Astrocyte of the cerebellum (primary cell): ENCODE measurements at regions of chr5 and their contacts with region 1.

Region 1: DNA sequence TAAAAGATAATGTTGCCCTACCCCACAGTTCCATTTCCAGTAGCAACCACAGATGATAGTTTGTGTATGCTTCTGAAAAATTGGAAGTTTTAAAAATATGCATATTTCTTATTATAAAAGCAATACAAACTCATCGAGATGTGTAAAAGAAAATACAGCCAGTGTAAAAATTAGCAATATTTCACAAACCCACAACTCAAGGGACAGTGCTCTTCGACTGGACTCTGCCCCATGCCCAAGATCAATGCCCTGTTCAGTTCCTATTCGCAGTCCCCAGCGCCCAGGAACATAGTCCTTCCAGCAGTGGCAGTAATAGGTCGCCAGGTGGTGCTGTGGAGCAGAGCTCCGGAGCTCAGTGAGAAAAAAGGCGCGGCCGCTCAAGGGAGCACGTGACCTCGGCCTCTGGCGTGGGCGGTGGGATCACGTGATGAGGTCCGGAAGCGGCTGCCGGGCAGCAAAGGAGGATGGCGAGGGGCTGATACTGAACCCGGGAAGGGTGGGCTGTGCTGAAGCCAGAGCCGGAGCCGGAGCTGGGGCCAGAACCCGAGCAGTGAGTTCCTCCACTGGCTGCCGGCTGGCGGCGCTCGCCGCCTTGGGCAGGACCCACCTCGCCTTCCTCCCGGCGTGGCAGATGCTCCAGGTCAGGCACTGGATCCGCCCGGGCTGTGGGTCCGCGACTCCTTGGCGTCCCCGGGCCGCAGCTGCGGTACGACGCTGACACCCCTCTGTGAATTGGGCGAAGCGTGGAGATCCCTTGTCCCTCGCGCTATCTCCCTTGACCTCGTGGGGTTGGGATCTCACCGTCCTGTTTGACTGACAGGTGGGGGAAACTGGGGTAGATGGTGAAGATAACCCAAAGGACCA is at the start of gene SLC36A1:
- DNase-seq: peak; percentile 81
- H3K4me3 ChIP-seq: peak within 1 kb of the TSS; percentile 88
- CTCF ChIP-seq: peak; percentile 99

Region 2: GRCh38 chr5:151492729-151493128 is 45.3 kb after region 1 on chr5:
- in situ Hi-C with region 1: no loop called
- DNase-seq: no peak
- H3K4me3 ChIP-seq: no peak overlapping the region
- CTCF ChIP-seq: no peak

Region 3: GRCh38 chr5:151647320-151647861 is 200.0 kb after region 1 on chr5:
- in situ Hi-C with region 1: loop called (anchors 5 kb)
- DNase-seq: no peak
- H3K4me3 ChIP-seq: no peak overlapping the region
- CTCF ChIP-seq: no peak